Vagina (tissue), 2 donors: ENCODE measurements at regions of chr4 and their contacts with region 1.

Region 1: GRCh38 chr4:175988511-175988910 is 77.1 kb upstream of the WDR17 start:
- DNase-seq: no peak
- H3K4me3 ChIP-seq: no peak overlapping the region
- H3K27ac ChIP-seq: no peak overlapping the region
- H3K4me1 ChIP-seq: no peaks in the 10 kb centered on the region
- H3K27me3 ChIP-seq: no peaks in the 10 kb centered on the region
- CTCF ChIP-seq: no peak
- POLR2A ChIP-seq: no peak

Region 2: GRCh38 chr4:175998777-175999176 is 10.3 kb after region 1 on chr4:
- intact Hi-C with region 1: loop called (anchors 1 kb)
- DNase-seq: no peak
- H3K4me3 ChIP-seq: no peak overlapping the region
- H3K27ac ChIP-seq: no peak overlapping the region
- H3K4me1 ChIP-seq: peaks cover 12% of the 10 kb centered on the region
- H3K27me3 ChIP-seq: no peaks in the 10 kb centered on the region
- CTCF ChIP-seq: no peak
- POLR2A ChIP-seq: no peak

Region 3: GRCh38 chr4:176927664-176928063 is 939.2 kb after region 1 on chr4:
- intact Hi-C with region 1: loop called (anchors 10 kb)
- DNase-seq: no peak
- H3K4me3 ChIP-seq: no peak overlapping the region
- H3K27ac ChIP-seq: no peak overlapping the region
- H3K4me1 ChIP-seq: no peaks in the 10 kb centered on the region
- H3K27me3 ChIP-seq: no peaks in the 10 kb centered on the region
- CTCF ChIP-seq: no peak
- POLR2A ChIP-seq: no peak

Region 4: GRCh38 chr4:177047070-177047850 is 1058.7 kb after region 1 on chr4:
- intact Hi-C with region 1: no loop called
- DNase-seq: no peak
- H3K4me3 ChIP-seq: no peak overlapping the region
- H3K27ac ChIP-seq: no peak overlapping the region
- H3K4me1 ChIP-seq: no peaks in the 10 kb centered on the region
- H3K27me3 ChIP-seq: no peaks in the 10 kb centered on the region
- CTCF ChIP-seq: peak; percentile 22 to 62 (median 51)
- POLR2A ChIP-seq: no peak